AG04449 (cell line): ENCODE measurements at regions of chr4 and their contacts with region 1.

Region 1: GRCh38 chr4:141174457-141174856 is 41.2 kb upstream of the RNF150 start:
- DNase-seq: no peak
- H3K4me3 ChIP-seq: no peak overlapping the region
- CTCF ChIP-seq: no peak

Region 2: GRCh38 chr4:141158219-141158618 is 16.2 kb before region 1 on chr4:
- CTCF ChIA-PET with region 1: interaction called, 14 read pairs
- POLR2A ChIA-PET with region 1: no interaction called
- DNase-seq: no peak
- H3K4me3 ChIP-seq: no peak overlapping the region
- CTCF ChIP-seq: peak; percentile 9